GM10248 (cell line): ENCODE measurements at regions of chr2 and their contacts with region 1.

Region 1: DNA sequence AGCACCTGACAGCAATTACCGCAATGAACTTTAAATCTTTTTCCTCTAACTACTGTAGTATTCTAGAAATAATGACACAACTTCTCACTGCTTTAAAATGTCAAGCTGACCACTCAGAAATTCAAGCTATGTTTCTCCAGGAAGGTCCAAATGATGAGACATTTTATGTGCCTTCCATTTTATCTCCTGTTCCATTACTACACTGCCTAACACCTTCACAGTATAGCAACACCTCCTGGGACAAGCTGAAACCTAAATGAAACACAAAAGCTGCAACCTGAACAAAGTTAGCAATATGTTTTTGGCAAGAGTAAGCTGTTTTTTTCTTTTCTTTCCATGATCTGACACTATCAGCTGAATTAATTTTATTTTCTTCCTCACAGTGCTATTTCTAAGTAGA is 81.9 kb downstream of the IKZF2 start:
- DNase-seq: no peak
- CTCF ChIP-seq: no peak

Region 2: DNA sequence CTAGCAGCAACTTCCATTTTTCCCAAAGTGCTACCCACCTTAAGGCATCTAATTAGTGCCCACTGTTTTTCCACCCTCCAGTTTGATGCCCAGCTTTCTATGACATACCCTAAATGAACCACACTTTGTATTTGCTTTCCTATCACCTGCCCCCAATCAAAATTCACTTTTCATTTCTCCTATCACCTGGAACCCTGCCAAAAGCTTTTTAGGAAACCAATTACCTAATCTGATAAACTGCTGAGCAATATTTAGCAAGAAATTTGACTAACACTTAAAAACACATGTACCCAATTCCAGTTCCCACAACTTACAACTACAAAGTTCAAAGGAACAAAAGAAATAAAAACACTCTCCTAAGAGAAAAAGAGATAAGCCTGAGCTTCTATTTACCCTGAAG is 10.2 kb after region 1 on chr2:
- CTCF ChIA-PET with region 1: interaction called, 13 read pairs
- POLR2A ChIA-PET with region 1: no interaction called
- DNase-seq: no peak
- CTCF ChIP-seq: no peak